Posterior cingulate gyrus (tissue), 11 donors: ENCODE measurements at regions of chr2 and their contacts with region 1.

Region 1: DNA sequence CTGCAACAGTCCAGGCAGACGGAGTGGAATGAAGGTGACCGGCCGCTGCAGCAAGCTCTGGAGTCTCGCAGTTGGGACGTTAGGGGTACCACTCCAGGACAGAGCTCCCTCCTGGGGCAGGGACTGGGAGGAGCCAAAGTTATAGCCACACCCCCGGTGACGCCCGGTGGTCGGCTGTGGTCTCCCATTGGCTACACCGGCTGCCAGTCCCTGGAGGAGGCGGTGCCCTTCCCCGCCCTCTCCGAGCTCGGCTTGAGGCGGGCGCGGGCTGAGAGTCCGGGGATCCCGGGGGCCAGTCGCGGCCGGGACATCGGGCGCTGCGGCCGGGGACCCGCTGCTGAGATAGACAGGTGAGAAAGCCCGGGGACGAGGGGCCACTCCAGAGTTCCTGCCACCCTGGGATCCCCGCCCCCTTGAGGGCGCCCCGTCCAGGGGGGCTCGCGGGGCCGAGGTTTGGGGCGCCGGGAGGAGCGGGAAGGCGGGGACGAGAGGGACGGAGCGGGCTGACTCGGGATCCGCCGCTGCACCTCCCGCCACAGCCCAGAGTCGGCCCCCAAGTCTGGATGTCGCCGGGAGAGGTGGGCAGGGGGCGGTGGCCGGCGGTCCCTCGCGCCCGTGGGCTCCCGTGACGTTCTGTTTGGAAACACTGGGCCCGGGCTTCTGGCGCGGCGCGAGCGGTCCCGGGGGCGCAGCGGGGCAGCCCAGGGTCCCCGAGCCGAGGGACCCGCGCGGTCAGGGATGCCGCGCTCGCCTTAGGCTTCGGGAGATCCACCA is at the start of gene PLEKHH2:
- DNase-seq: peak; percentile 73 to 98 (median 85)

Region 2: DNA sequence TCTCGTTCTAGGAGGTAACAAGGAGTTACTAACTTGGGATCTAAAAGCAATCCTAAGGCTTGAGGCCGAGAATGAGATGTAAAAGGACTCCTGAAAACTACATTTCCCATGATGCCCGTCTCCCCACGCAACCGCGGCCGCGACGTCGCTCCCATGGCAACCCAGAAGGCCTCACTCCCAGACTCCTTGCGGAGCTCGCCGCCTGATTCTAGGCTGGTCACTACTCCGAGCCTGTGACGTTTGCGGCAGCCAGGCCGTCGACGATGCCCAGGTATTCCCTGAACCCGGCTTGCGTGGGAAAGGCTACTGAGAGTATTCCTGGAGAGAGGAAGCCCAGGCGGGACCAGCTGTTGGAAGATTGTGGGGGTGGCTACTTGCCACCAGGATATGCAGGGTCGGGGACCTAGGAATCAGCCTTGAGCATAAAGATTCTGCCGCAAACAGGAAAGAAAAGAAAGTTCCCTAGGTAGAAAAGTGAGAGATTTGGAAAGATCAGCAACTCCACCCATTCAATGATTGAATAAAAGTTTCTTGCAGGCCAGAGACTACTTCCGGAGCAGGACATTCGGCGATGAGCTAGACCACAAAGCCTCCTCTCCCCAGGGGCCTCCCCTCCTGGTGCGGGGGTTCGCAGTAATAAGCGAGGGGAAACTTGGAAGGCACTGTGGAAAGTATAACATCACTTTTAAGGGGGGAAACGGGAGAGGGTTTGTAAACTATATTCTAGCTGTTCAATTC is 136.8 kb after region 1 on chr2 and contains the start of gene DYNC2LI1:
- intact Hi-C with region 1: loop called (anchors 10 kb)
- DNase-seq: peak; percentile 82 to 99 (median 89)